Breast epithelium (tissue), 4 donors: ENCODE measurements at regions of chr7 and their contacts with region 1.

Region 1: DNA sequence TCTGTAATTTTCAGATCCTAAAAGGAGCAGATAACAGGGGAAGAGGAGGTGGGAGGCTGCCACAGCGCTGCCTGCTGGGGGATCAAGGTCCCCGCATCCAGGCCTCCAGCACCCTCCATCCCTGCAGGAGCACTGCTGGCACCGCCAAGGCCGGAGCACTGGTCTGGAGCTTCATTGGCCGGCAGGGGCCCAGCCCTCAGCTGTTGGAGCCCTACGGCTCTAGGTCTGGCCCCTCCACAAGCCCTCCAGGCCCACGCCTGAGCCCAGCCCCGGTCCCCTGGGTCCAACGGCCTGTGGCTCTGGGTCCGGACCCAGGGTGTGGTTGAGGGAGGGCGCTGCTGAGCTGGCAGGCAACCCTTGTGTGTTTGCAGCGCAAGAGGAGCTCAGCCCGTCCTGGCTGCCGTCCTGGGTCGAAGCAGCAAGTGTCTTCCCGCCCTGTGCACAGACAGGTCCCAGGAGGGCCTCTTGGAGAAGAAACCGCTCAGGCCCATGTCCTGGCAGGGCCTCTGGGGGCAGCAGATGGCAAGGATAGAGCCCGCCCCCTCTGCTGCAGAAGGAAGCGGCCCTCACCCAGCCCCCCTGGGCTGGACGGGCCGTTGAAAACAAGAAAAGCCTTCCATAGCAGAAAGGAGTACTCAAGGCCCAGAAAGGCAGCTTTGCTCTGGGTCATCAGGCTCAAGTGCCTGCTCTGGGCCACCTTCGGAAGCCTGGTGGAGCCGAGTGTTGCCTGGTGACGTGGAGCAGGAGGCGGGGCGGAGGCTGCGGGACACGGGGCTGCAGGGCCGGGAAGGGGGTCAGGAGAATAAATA is 54.3 kb upstream of the TNRC18 start:
- DNase-seq: no peak
- H3K4me3 ChIP-seq: peak overlapping the region; percentile 22 to 33 (median 28)
- H3K27ac ChIP-seq: no peak overlapping the region
- H3K4me1 ChIP-seq: no peaks in the 10 kb centered on the region
- H3K27me3 ChIP-seq: no peaks in the 10 kb centered on the region
- CTCF ChIP-seq: no peak
- POLR2A ChIP-seq: no peak

Region 2: DNA sequence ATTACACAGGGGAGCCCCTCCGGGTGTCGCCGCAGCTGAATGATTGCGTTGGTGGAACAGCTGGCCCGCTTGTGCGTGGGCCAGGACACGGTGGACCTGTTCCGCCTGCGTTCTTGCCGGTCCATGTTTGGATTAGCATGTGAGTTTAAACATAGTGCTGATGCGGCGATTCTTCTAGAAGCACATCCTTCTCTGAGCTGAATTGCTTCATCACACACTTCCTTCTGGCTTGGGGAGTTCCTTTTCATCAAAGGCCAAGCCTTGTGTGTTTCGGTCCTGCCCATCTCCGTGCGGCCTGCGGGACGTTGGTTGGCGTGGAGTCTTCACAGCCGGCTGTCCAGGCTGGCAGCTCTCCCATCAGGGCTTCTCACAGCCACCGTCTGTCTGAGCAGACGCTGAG is 240.6 kb before region 1 on chr7:
- intact Hi-C with region 1: loop called (anchors 2 kb)
- DNase-seq: peak in 1 of 2 donors; percentile 66
- H3K4me3 ChIP-seq: peak overlapping the region; percentile 20 to 42 (median 34)
- H3K27ac ChIP-seq: peak overlapping the region; percentile 10 to 48
- H3K4me1 ChIP-seq: no peaks in the 10 kb centered on the region
- H3K27me3 ChIP-seq: no peaks in the 10 kb centered on the region
- CTCF ChIP-seq: no peak
- POLR2A ChIP-seq: no peak